Esophagus squamous epithelium (tissue), 5 donors: ENCODE measurements at regions of chr7 and their contacts with region 1.

Region 1: GRCh38 chr7:100215895-100216294 is 3.9 kb upstream of the PVRIG start:
- DNase-seq: no peak
- H3K4me3 ChIP-seq: no peak overlapping the region
- H3K27ac ChIP-seq: no peak overlapping the region
- H3K4me1 ChIP-seq: peaks cover 0 to 10% (median 0%) of the 10 kb centered on the region in 3 donors
- H3K27me3 ChIP-seq: no peaks in the 10 kb centered on the region
- CTCF ChIP-seq: no peak
- POLR2A ChIP-seq: no peak

Region 2: DNA sequence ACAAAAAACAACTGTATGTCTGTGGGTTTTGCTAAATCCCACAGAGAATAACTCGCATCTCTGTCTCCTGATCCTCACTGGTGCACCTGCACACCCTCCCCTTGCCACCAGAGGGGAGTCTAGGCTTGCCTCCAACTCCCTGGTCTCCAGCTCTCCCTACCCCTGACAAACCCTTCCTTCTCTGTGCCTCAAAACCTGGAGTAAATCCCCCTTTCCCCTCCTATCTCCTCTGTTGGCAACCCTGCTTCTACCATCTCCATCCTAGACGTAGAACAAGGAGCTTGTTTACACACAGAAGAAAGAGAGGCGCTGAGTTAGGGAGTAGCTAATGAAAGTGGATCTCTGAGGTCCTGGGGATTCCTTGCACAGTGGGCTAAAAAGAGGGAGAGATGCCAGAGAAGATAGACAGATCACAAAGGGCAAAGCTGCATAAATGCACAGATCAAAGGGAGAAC is 83.2 kb before region 1 on chr7:
- intact Hi-C with region 1: loop called (anchors 2 kb)
- DNase-seq: no peak
- H3K4me3 ChIP-seq: no peak overlapping the region
- H3K27ac ChIP-seq: peak overlapping the region in 2 of 4 donors; percentile 51 to 62
- H3K4me1 ChIP-seq: peaks cover 10 to 49% (median 23%) of the 10 kb centered on the region in 3 donors
- H3K27me3 ChIP-seq: no peaks in the 10 kb centered on the region
- CTCF ChIP-seq: peak; percentile 49 to 94 (median 88)
- POLR2A ChIP-seq: no peak